ENCODE measurements at regions of chr22 and their contacts with region 1.

Region 1: GRCh38 chr22:31345331-31346254 is 553 bp downstream of the PATZ1 start:
- DNase-seq: peak; percentile 83
- ATAC-seq: peak; percentile 52
- H3K4me3 ChIP-seq: peak overlapping the region; percentile 56
- H3K27ac ChIP-seq: peak overlapping the region; percentile 74
- H3K4me1 ChIP-seq: peaks cover 27% of the 10 kb centered on the region
- H3K27me3 ChIP-seq: no peaks in the 10 kb centered on the region
- CTCF ChIP-seq: peak; percentile 86
- POLR2A ChIP-seq: peak; percentile 37; the same call in 1 of the 2 replicates
- RAD21 ChIP-seq: peak; percentile 51

Region 2: DNA sequence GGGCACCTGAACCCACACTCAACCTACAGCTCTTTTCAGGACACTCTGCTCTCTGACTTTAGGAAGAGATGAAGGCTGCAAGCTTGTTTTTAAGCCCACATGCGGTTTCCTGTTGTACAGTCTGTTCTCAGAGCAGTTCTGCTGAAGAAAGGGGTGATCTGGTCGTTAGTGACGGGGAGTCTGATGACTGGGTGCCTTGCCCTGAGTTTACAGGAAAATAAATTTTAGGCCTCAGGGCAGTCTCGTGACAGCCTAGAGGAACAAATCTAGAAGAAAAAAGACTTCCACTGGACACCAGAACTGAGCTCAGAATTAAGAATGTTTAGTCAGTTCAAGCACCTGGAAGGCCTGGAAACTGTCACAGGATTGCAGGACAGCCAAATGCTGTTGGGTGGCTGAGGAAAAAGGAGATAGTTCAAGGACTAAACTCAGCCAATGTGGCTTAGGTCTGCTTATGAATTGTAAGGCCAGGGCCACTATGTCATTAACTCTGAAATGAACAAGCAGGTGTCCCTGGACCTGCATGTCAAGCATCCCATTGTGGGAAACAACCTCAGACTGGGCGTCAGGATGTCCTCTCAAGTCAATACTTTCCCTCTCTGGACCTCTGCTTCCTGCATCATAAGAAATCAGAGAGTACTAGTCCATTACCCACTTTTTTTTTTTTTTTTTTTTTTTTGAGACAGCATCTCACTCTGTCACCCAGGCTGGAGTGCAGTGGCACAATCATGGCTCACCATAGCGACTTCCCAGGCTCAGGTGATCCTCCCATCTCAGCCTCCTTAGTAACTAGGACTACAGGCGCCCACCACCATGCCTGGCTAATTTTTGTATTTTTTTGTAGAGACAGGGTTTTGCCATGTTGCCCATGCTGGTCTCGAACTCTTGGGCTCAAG is 59.0 kb before region 1 on chr22:
- CTCF ChIA-PET with region 1: no interaction called
- POLR2A ChIA-PET with region 1: no interaction called
- dilution Hi-C with region 1: no loop called
- in situ Hi-C with region 1: loop called (anchors 10 kb)
- intact Hi-C with region 1: no loop called
- DNase-seq: no peak
- ATAC-seq: no peak
- H3K4me3 ChIP-seq: no peak overlapping the region
- H3K27ac ChIP-seq: no peak overlapping the region
- H3K4me1 ChIP-seq: peaks cover 1% of the 10 kb centered on the region; the same call in 1 of the 2 replicates
- H3K27me3 ChIP-seq: no peaks in the 10 kb centered on the region
- CTCF ChIP-seq: no peak
- POLR2A ChIP-seq: no peak
- RAD21 ChIP-seq: no peak

Region 3: DNA sequence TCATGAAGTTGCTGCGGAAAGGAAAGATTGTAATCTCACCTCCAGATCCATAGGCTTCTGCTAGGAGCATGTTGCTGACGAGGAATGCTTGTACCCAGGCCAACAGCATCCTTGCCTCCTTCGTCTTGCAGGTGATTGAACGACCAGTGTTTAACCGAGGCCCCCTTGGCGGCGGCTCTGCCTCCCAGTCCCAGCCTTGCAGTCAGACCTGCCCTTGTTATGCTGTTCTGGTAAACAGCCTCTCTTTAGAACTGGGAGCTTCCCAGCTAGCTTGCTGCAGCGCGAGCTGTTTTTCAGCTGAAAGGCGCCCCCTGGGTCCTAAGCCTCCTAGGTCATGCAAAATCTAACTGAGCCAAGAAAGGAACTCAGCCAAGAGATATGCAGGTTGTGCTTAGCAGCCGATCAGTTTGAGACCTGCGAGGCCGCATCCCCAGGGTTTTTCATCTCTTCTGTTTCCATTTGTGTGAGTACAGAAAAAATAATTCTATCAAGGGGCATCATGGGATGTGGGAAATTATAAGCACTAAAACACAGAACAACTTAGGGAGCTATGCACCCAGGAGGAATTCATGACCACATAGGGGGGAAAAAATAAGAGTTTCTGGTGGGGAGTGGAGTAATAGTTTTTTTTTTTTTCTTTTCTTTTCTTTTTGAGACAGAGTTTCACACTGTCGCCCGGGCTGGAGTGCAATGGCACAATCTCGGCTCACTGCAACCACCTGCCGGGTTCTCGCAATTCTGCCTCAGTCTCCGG is 53.2 kb before region 1 on chr22 and contains the start of gene PIK3IP1:
- CTCF ChIA-PET with region 1: no interaction called
- POLR2A ChIA-PET with region 1: no interaction called
- dilution Hi-C with region 1: no loop called
- in situ Hi-C with region 1: loop called (anchors 10 kb)
- intact Hi-C with region 1: loop called (anchors 2 kb)
- DNase-seq: peak; percentile 91
- ATAC-seq: peak; percentile 73
- H3K4me3 ChIP-seq: peak within 1 kb of the TSS; percentile 54
- H3K27ac ChIP-seq: peak within 1 kb of the TSS; percentile 69
- H3K4me1 ChIP-seq: peaks cover 9% of the 10 kb centered on the region; the same call in 1 of the 2 replicates
- H3K27me3 ChIP-seq: no peaks in the 10 kb centered on the region
- CTCF ChIP-seq: peak; percentile 51
- POLR2A ChIP-seq: peak; percentile 71; the same call in 1 of the 2 replicates
- RAD21 ChIP-seq: peak; percentile 40
- total RNA-seq, gene PIK3IP1: 12.9 and 13.3 TPM in 2 replicates

Region 4: DNA sequence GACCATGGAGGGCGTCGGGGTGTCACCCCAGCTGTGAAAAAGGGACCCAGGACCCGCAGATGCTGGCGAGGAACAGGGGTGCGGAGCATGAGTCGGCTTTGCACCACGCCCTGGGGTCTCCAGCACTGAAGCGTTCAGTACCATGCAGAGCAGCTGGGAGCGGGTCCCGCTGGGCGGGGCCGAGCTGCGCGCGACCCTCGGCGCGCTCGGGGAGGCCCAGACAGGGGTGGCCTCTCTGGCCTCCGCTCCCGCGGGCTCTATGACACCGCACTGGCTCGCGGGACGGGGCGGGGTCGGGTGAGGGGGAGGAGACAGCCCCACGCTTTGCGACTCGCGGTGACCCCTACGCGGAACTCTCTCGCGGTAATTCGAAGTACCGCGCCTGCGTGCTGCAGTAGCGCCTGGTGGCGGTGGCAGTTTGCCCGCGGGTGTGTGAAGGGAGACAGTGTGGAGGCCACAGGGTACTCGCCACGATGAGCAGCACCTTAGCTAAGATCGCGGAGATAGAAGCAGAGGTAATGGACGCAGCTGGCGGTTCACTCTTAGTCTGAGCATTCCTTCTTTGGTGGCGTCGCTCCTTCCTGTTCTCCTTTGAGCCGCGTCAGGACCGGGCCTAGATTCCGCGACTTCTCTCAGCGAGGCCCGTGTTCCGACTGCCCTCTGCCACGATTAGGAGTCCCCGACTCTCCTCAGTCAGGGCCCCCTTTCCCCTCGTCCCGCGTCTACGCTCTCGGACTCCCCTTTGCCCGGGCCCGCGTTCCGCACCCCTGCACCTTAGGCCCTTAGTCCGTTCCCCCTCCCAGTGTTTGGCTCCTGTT is 53.8 kb after region 1 on chr22 and contains the start of gene DRG1:
- CTCF ChIA-PET with region 1: no interaction called
- POLR2A ChIA-PET with region 1: no interaction called
- dilution Hi-C with region 1: no loop called
- in situ Hi-C with region 1: loop called (anchors 5 kb)
- intact Hi-C with region 1: loop called (anchors 1 kb)
- DNase-seq: peak; percentile 92
- ATAC-seq: peak; percentile 99
- H3K4me3 ChIP-seq: peak within 1 kb of the TSS; percentile 88
- H3K27ac ChIP-seq: peak within 1 kb of the TSS; percentile 95
- H3K4me1 ChIP-seq: peaks cover 2% of the 10 kb centered on the region; the same call in 1 of the 2 replicates
- H3K27me3 ChIP-seq: no peaks in the 10 kb centered on the region
- CTCF ChIP-seq: no peak
- POLR2A ChIP-seq: peak; percentile 92
- RAD21 ChIP-seq: no peak
- total RNA-seq, gene DRG1: 141 and 156 TPM in 2 replicates

Measured in IMR-90 (cell line).